Panc1 (cell line): ENCODE measurements at regions of chr11 and their contacts with region 1.

Region 1: GRCh38 chr11:72652873-72653630 is 21.2 kb downstream of the PDE2A start:
- DNase-seq: no peak
- ATAC-seq: no peak
- H3K4me3 ChIP-seq: no peak overlapping the region
- H3K27ac ChIP-seq: no peak overlapping the region
- H3K4me1 ChIP-seq: no peaks in the 10 kb centered on the region
- H3K27me3 ChIP-seq: no peaks in the 10 kb centered on the region
- CTCF ChIP-seq: no peak

Region 2: DNA sequence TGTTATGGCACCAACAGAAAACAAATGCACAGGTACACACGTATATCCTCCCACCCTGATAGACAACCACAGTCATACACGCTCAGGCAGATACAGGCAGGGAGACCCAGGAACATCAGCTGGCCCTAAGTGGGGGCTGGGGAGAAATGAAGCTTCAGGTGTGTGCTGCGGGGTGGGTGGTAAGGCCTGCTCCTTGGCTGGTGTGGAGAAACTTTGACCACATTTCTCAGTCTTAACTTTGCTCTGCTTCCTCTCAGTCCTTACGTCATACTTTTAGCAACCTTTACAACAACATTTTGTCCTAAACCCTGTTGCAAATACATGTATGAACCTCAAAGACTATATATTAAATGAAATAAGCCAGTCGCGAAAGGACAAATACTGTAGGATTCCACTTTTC is 533.9 kb before region 1 on chr11:
- CTCF ChIA-PET with region 1: no interaction called
- POLR2A ChIA-PET with region 1: no interaction called
- in situ Hi-C with region 1: loop called (anchors 10 kb)
- intact Hi-C with region 1: no loop called
- DNase-seq: no peak
- ATAC-seq: no peak
- H3K4me3 ChIP-seq: no peak overlapping the region
- H3K27ac ChIP-seq: no peak overlapping the region
- H3K4me1 ChIP-seq: no peaks in the 10 kb centered on the region
- H3K27me3 ChIP-seq: no peaks in the 10 kb centered on the region
- CTCF ChIP-seq: no peak

Region 3: GRCh38 chr11:72454791-72455190 is 198.3 kb before region 1 on chr11:
- CTCF ChIA-PET with region 1: no interaction called
- POLR2A ChIA-PET with region 1: no interaction called
- in situ Hi-C with region 1: loop called (anchors 10 kb)
- intact Hi-C with region 1: no loop called
- DNase-seq: no peak
- ATAC-seq: no peak
- H3K4me3 ChIP-seq: no peak overlapping the region
- H3K27ac ChIP-seq: no peak overlapping the region
- H3K4me1 ChIP-seq: no peaks in the 10 kb centered on the region
- H3K27me3 ChIP-seq: peaks cover 11% of the 10 kb centered on the region
- CTCF ChIP-seq: peak; percentile 65

Region 4: GRCh38 chr11:72553706-72554105 is 99.3 kb before region 1 on chr11:
- CTCF ChIA-PET with region 1: no interaction called
- POLR2A ChIA-PET with region 1: no interaction called
- in situ Hi-C with region 1: loop called (anchors 10 kb)
- intact Hi-C with region 1: no loop called
- DNase-seq: no peak
- ATAC-seq: no peak
- H3K4me3 ChIP-seq: no peak overlapping the region
- H3K27ac ChIP-seq: no peak overlapping the region
- H3K4me1 ChIP-seq: no peaks in the 10 kb centered on the region
- H3K27me3 ChIP-seq: peaks cover 21% of the 10 kb centered on the region
- CTCF ChIP-seq: no peak; the same call in 1 of the 2 replicates

Region 5: DNA sequence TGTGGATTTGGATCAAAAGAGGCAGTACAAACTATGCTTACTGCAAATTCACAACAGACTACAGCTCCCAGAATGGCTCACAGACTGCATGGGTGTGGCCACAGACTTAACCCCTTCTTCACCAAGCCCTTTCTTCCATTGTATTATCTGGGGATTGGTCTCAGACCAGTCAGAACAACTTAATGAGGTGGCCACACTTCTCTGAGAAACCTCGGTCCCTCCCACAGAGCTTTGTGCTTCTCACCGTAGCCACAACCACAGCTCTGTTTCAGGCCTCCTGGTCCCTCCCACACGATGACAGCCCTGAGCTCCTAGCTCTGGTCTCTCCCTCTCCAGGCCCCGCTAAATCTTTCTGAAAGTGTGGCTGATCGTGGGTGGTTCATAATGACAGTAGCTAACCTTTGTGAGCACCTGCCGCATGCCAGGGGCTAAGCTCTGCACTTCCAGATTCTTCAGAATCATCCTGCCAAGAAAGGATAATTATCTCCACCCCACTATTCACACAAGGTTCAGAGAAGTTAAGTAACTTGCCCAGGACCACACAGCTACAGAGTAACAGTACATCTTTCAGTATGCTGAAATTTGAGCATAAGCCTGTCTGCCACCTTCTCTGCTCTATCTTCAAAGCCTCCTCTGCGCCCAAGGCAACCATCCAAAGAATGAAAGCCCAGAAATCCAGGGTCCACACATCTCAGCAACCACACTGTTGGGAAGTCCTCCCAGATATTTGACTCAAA is 15.7 kb after region 1 on chr11:
- CTCF ChIA-PET with region 1: no interaction called
- POLR2A ChIA-PET with region 1: no interaction called
- in situ Hi-C with region 1: no loop called
- intact Hi-C with region 1: no loop called
- DNase-seq: no peak
- ATAC-seq: peak; percentile 42; the same call in 1 of the 2 replicates
- H3K4me3 ChIP-seq: no peak overlapping the region
- H3K27ac ChIP-seq: no peak overlapping the region
- H3K4me1 ChIP-seq: no peaks in the 10 kb centered on the region
- H3K27me3 ChIP-seq: peaks cover 2% of the 10 kb centered on the region; the same call in 1 of the 2 replicates
- CTCF ChIP-seq: no peak